ENCODE measurements at regions of chr10 and their contacts with region 1.

Region 1: DNA sequence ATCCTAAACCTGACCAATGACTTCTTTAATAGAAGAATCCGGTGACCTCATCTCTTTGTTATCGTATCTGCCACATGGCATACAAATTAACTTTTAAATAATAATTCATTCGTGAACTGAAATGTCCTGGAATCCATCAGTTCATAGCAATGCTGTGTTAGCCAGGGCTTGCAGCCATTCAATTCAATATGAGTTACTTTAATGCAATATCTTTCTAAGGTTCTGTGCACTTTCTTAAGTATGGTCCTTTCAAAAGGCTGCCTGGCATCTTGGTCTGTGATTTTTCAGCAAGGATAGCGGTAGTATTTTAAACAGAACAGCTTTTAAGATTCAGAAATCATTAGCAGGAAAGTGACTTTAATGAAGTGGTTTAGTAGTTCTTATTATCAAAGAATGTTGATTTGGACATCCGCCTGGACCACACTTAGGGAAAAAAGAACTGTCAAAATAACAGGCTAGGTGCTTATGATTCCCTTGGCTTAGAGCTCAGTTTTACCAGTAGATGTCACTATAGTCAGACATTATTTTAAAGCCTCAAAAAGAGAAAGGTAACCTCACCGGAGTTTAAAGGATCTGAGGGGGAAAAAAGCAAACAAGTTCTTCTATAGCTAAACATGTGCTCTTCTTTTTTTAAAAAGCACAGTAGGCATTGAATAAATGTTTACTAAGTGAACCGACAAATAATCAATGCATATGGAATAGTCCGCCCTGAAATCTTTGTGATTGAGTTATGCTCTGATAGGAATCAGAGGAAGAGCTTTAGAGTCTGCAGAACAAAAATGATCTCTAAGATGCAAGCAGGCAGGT is 22.7 kb downstream of the SLC35G1 start:
- DNase-seq: peak; percentile 43
- H3K4me3 Mint-ChIP-seq: no peak overlapping the region
- H3K27ac Mint-ChIP-seq: no peak overlapping the region
- H3K4me1 Mint-ChIP-seq: no peaks in the 10 kb centered on the region
- H3K27me3 Mint-ChIP-seq: no peaks in the 10 kb centered on the region
- CTCF ChIP-seq: peak; percentile 46

Region 2: DNA sequence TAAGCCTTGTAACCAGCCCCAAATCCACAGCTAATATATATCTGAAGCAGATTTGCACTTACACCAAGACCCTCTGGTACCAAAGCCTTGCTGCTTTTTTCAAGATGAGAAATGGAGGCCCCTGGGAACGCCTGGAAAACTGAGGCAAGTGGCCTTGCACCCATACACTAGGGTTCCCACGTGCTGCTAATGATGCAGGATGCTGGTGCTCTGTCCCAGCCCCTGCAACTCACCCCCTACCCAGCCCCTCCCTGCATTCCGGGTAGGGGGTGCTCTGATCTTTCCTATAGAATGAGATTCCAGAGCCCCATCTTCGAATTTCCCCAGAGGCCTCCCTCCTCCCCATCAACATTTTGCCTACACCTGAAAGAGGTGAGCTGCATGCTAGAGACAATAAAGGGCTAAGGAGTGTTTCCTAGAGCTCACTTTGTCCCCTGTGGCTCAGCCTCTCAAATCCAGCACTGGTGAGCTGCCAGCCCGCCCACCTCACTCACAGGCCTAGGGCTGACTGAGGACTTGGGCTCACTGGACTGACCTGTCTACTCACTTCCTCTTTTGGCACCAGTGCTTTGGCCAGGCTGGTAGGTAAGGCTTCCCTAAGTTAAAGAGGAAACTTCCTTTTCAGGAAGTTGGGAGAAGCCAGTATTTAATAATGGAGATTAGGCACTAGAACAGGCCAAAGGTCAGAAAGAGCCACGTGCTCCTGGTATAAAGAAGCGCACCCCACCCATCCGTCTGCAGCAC is 325.2 kb before region 1 on chr10:
- CTCF ChIA-PET with region 1: no interaction called
- POLR2A ChIA-PET with region 1: no interaction called
- intact Hi-C with region 1: no loop called
- DNase-seq: no peak
- H3K4me3 Mint-ChIP-seq: no peak overlapping the region
- H3K27ac Mint-ChIP-seq: no peak overlapping the region
- H3K4me1 Mint-ChIP-seq: no peaks in the 10 kb centered on the region
- H3K27me3 Mint-ChIP-seq: peaks cover 10% of the 10 kb centered on the region
- CTCF ChIP-seq: no peak

Region 3: GRCh38 chr10:93680412-93681047 is 235.9 kb before region 1 on chr10:
- CTCF ChIA-PET with region 1: no interaction called
- POLR2A ChIA-PET with region 1: no interaction called
- intact Hi-C with region 1: no loop called
- DNase-seq: peak; percentile 55
- H3K4me3 Mint-ChIP-seq: no peak overlapping the region
- H3K27ac Mint-ChIP-seq: no peak overlapping the region
- H3K4me1 Mint-ChIP-seq: no peaks in the 10 kb centered on the region
- H3K27me3 Mint-ChIP-seq: no peaks in the 10 kb centered on the region
- CTCF ChIP-seq: peak; percentile 60

Region 4: DNA sequence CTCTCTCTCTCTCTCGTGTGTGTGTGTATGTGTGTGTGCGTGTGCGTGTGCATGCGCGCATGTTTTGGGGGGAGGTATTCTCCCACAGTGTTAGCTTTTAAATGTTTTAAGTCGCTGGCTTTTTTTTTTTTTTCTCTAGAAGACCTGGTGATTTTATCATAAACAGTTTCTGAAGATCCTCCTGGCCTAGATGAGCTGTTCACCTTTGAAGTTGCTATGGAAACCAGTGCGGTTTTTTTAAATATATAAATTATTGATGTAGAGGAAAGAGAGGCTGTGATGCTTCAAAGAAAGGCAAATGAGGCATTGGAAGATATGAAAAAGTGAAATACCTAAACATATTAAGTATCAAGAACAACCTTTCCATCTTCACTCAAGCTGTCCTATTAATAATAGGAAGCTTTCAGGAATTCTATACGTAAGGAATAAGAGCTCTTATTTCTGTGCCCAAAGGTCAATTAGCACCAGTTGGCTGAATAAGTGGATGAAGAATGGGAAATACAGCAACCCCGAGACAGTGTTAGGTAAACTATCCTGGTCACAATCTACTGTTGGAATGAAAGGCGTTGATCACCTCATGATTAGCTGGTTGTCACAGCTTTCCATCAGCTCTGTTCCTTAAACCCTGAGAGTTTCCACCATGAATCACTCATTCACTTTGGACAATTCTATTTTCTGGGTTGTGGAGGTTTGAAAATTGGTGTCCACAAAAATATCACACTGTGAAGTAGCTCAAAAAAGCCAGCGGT is 89.2 kb before region 1 on chr10:
- CTCF ChIA-PET with region 1: no interaction called
- POLR2A ChIA-PET with region 1: no interaction called
- intact Hi-C with region 1: no loop called
- DNase-seq: no peak
- H3K4me3 Mint-ChIP-seq: no peak overlapping the region
- H3K27ac Mint-ChIP-seq: no peak overlapping the region
- H3K4me1 Mint-ChIP-seq: no peaks in the 10 kb centered on the region
- H3K27me3 Mint-ChIP-seq: peaks cover 11% of the 10 kb centered on the region
- CTCF ChIP-seq: no peak

Region 5: DNA sequence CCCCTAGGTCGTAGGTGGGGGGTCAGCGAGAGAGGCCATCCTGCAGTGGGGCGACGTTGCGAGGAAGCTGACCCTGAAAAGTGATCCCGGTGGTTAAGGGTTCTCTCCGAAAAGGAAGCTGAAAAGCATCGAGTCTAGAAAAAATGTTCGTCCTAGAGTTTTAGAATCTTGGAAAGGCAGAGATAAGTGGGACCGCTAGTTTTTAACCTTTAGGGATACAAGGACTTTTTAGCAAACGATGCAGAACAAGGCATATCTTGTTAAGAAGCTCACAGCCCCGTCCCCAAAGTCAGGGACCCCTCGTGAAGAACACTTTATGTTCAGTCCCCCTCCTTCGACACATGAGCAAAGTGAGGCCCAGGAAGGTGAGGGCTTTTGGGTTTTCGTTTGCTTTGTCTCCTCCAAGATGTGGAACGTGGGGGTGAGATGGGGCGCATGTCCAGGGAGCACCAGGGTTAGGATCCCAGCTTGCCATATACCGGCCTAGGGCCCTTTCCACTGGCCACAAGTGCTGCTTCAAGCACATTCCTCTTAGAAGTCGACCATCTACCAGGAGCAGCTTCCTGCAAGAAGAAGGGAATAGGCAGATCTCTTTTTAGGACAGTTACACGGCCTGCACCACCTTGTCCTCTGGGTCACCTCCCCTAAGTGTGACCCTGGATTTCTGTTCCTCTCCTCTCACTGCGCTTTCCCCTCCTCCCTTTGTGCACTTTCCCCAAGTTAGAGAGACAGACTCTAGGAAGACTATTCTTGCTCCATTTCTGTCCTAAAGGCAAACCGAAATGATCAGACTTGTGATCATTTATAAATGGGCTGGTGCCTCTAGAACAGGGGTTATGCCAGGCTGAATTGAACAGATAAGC is 21.7 kb before region 1 on chr10:
- CTCF ChIA-PET with region 1: interaction called, 11 read pairs
- POLR2A ChIA-PET with region 1: interaction called, 3 read pairs
- intact Hi-C with region 1: no loop called
- DNase-seq: peak; percentile 13
- H3K4me3 Mint-ChIP-seq: peak overlapping the region; percentile 80
- H3K27ac Mint-ChIP-seq: no peak overlapping the region
- H3K4me1 Mint-ChIP-seq: peaks cover 12% of the 10 kb centered on the region
- H3K27me3 Mint-ChIP-seq: no peaks in the 10 kb centered on the region
- CTCF ChIP-seq: no peak

Region 6: GRCh38 chr10:93904901-93905300 is 11.6 kb before region 1 on chr10:
- CTCF ChIA-PET with region 1: interaction called, 60 read pairs
- POLR2A ChIA-PET with region 1: interaction called, 4 read pairs
- intact Hi-C with region 1: no loop called
- DNase-seq: no peak
- H3K4me3 Mint-ChIP-seq: no peak overlapping the region
- H3K27ac Mint-ChIP-seq: no peak overlapping the region
- H3K4me1 Mint-ChIP-seq: no peaks in the 10 kb centered on the region
- H3K27me3 Mint-ChIP-seq: no peaks in the 10 kb centered on the region
- CTCF ChIP-seq: no peak

Region 7: DNA sequence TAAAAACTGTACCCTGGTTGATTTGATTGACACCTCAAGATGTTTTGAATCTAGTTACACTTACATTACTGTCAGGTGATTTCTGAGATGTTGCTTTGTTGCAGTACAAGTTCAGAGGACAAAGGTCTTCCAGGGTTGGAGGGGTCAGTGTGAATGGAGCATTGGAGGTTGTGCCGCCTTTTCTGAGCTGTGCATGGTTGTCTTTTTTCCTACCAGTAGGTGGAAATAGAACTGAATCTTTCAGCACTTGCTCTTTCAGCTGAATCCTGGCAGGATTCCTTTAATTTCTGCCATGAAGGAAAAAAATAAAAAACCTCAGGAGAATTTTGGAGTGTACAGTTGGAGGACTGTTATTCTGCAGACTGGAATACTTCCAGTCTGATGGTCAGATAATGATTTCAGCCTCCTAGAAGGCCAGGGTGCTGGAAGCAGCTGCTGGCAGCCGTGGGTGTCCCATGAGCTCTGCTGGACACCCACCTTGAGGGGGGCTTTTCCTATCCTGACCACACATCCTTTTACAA is 159.9 kb after region 1 on chr10:
- CTCF ChIA-PET with region 1: interaction called, 8 read pairs
- POLR2A ChIA-PET with region 1: no interaction called
- intact Hi-C with region 1: loop called (anchors 10 kb)
- DNase-seq: peak; percentile 5
- H3K4me3 Mint-ChIP-seq: no peak overlapping the region
- H3K27ac Mint-ChIP-seq: no peak overlapping the region
- H3K4me1 Mint-ChIP-seq: no peaks in the 10 kb centered on the region
- H3K27me3 Mint-ChIP-seq: no peaks in the 10 kb centered on the region
- CTCF ChIP-seq: peak; percentile 23

Region 8: DNA sequence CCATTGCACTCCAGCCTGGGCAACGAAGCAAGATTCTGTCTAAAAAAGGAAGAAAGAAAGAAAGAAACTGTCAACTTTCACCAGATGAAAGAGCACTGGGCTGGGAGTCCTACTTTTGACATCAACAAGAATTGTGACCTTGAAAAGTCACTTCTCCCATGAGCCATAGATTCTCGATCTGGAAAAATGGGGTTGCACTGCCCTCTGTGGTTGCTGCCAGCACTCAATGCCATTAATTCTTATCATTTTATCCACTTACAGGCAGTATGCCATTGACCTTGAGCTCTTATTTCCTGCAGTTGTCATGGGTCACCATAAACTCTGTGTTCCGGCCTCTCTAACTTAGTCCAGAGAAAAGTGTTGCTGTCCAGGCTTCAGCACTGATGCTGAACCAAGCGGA is 309.1 kb after region 1 on chr10:
- CTCF ChIA-PET with region 1: interaction called, 9 read pairs
- POLR2A ChIA-PET with region 1: no interaction called
- intact Hi-C with region 1: loop called (anchors 1 kb)
- DNase-seq: peak; percentile 30
- H3K4me3 Mint-ChIP-seq: no peak overlapping the region
- H3K27ac Mint-ChIP-seq: no peak overlapping the region
- H3K4me1 Mint-ChIP-seq: no peaks in the 10 kb centered on the region
- H3K27me3 Mint-ChIP-seq: no peaks in the 10 kb centered on the region
- CTCF ChIP-seq: peak; percentile 29